ENCODE measurements at regions of chr18 and their contacts with region 1.

Region 1: DNA sequence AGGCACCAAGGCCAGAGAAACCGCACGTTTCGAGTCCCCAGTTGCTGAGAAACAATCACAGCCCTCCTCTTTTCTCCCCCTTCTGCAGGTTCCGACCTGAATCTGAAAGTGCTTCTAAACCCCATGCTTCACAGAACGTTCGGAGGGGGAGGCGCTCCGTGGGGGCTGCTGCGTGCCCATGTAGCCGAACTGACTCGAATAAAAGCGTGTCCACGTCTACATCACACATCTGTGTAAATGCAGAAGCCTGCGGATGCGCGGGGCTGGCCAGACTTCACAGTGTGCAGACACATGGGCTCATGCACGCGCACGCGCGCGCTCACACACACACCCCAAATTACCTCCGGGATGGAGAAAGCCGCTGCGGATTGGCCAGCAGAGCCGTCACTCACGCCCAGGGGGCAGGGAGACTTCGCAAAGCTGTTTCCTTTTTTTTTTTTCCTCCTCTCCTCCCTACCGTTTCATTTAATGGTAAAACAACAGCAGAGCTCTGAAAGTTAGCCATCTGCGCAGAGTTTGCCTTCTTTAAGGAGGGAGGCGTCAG is 2.3 kb downstream of the ZNF516 start:
- DNase-seq: peak; percentile 98
- ATAC-seq: peak; percentile 73
- H3K4me3 Mint-ChIP-seq: peak overlapping the region; percentile 91
- H3K27ac Mint-ChIP-seq: peak overlapping the region; percentile 88
- H3K4me1 Mint-ChIP-seq: peaks cover 36% of the 10 kb centered on the region
- H3K27me3 Mint-ChIP-seq: peaks cover 16% of the 10 kb centered on the region
- CTCF ChIP-seq: no peak

Region 2: GRCh38 chr18:74597662-74598349 is 1894.9 kb before region 1 on chr18 and contains the start of gene ZNF407:
- CTCF ChIA-PET with region 1: no interaction called
- POLR2A ChIA-PET with region 1: no interaction called
- intact Hi-C with region 1: loop called (anchors 5 kb)
- DNase-seq: peak; percentile 85
- ATAC-seq: peak; percentile 84
- H3K4me3 Mint-ChIP-seq: peak within 1 kb of the TSS; percentile 96
- H3K27ac Mint-ChIP-seq: peak within 1 kb of the TSS; percentile 98
- H3K4me1 Mint-ChIP-seq: peaks cover 49% of the 10 kb centered on the region
- H3K27me3 Mint-ChIP-seq: no peaks in the 10 kb centered on the region
- CTCF ChIP-seq: no peak
- total RNA-seq, gene ZNF407: 24.0 and 26.7 TPM in 2 replicates

Region 3: GRCh38 chr18:76450452-76451395 is 42.0 kb before region 1 on chr18:
- CTCF ChIA-PET with region 1: no interaction called
- POLR2A ChIA-PET with region 1: interaction called, 9 read pairs
- intact Hi-C with region 1: loop called (anchors 5 kb)
- DNase-seq: no peak
- ATAC-seq: peak; percentile 25
- H3K4me3 Mint-ChIP-seq: peak overlapping the region; percentile 90
- H3K27ac Mint-ChIP-seq: peak overlapping the region; percentile 21
- H3K4me1 Mint-ChIP-seq: peaks cover 40% of the 10 kb centered on the region
- H3K27me3 Mint-ChIP-seq: no peaks in the 10 kb centered on the region
- CTCF ChIP-seq: no peak

Region 4: GRCh38 chr18:76476665-76477561 is 15.8 kb before region 1 on chr18:
- CTCF ChIA-PET with region 1: no interaction called
- POLR2A ChIA-PET with region 1: interaction called, 3 read pairs
- intact Hi-C with region 1: loop called (anchors 2 kb)
- DNase-seq: no peak
- ATAC-seq: peak; percentile 14
- H3K4me3 Mint-ChIP-seq: peak overlapping the region; percentile 29
- H3K27ac Mint-ChIP-seq: peak overlapping the region; percentile 19
- H3K4me1 Mint-ChIP-seq: peaks cover 30% of the 10 kb centered on the region
- H3K27me3 Mint-ChIP-seq: peaks cover 2% of the 10 kb centered on the region
- CTCF ChIP-seq: no peak

Region 5: GRCh38 chr18:76518123-76518859 is 25.6 kb after region 1 on chr18:
- CTCF ChIA-PET with region 1: no interaction called
- POLR2A ChIA-PET with region 1: interaction called, 4 read pairs
- intact Hi-C with region 1: loop called (anchors 2 kb)
- DNase-seq: peak; percentile 17
- ATAC-seq: no peak
- H3K4me3 Mint-ChIP-seq: peak overlapping the region; percentile 75
- H3K27ac Mint-ChIP-seq: no peak overlapping the region
- H3K4me1 Mint-ChIP-seq: peaks cover 17% of the 10 kb centered on the region
- H3K27me3 Mint-ChIP-seq: peaks cover 14% of the 10 kb centered on the region
- CTCF ChIP-seq: no peak

Region 6: DNA sequence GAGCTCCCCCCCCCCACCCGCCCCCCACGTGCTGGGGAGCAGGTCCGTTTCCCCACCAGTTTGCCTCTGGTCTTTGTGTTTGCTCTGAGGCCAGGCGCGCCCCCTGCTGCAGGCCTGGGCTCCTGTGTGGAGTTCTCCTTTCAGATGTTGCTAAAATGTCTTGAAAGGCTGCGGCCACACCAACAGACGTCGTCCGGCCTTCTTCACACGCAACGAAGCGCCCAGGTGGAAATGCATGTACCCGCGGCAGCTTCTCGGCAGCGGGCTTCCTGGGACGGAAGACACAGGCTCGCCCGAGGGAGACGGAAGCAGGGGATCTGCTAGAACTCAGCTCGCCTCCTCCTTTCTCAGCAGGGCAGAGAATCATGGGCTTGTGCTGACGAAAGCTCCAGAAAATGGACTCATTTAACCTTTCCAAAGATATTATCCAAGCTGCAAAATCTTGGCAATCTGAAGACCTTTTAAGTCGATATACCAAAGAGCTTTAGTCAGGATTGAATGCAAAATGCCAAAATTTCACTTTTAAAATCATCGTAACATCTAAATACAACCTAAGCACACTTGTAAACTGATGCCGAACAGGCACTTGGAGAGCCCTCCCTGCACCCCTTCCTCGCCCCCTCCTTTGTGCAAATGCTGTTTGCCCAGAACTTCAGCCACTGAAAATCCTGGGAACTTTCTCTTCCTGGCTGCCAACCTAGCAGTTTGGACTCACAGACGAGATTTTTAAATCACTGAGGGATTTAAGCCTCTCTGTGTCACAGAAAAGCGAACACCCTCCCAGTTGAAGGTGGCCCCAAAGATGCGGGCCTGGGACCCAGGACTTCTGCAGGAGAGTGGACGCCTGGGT is 127.8 kb after region 1 on chr18:
- CTCF ChIA-PET with region 1: no interaction called
- POLR2A ChIA-PET with region 1: interaction called, 6 read pairs
- intact Hi-C with region 1: loop called (anchors 1 kb)
- DNase-seq: peak; percentile 27
- ATAC-seq: peak; percentile 62
- H3K4me3 Mint-ChIP-seq: no peak overlapping the region
- H3K27ac Mint-ChIP-seq: no peak overlapping the region
- H3K4me1 Mint-ChIP-seq: peaks cover 7% of the 10 kb centered on the region
- H3K27me3 Mint-ChIP-seq: peaks cover 35% of the 10 kb centered on the region
- CTCF ChIP-seq: no peak

Region 7: DNA sequence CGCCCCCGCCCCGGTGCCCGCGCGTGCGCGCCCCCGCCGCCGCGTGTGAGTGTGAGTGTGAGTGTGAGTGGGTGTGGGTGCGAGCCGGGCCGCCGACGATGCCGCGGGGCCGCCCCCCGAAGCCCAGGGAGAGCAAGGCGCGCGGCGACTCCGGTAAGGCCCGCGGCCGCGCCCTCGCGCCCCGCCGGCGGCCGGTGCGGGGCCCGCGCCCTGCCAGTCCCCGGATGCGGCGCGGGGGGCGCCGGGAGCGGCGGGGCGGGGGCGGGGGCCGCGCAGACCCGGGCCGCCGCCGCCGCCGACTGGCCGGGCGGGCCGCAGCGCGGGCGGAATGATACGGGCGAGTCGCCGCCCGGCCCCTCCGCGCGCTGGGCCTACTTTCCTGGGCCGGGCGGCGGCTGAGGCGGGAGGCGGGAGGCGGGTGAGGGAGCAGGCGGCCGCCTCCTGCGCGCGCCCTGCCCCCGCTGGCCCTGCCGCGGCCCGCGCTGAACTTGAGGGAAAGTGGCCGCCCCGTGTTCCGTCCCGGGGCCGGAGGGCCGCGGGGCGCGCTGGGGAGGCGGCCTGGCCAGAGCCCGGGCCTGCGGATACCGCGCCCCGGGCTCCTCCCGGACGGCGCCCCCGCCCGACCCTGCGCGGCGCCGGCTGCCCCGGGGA is 329.9 kb after region 1 on chr18 and contains the start of gene ZNF236:
- CTCF ChIA-PET with region 1: no interaction called
- POLR2A ChIA-PET with region 1: no interaction called
- intact Hi-C with region 1: loop called (anchors 2 kb)
- DNase-seq: peak; percentile 79
- ATAC-seq: peak; percentile 58
- H3K4me3 Mint-ChIP-seq: peak within 1 kb of the TSS; percentile 95
- H3K27ac Mint-ChIP-seq: peak within 1 kb of the TSS; percentile 97
- H3K4me1 Mint-ChIP-seq: peaks cover 64% of the 10 kb centered on the region
- H3K27me3 Mint-ChIP-seq: no peaks in the 10 kb centered on the region
- CTCF ChIP-seq: no peak
- total RNA-seq, gene ZNF236: 27.4 and 28.2 TPM in 2 replicates

Measured in activated B cell treated with CpG ODN at 0.5 μM for 24 hours (primary cell).